ENCODE measurements at regions of chr1 and their contacts with region 1.

Region 1: GRCh38 chr1:171485375-171486047 is at the start of gene PRRC2C:
- DNase-seq: peak; percentile 94 to 96
- H3K4me3 ChIP-seq: peak within 1 kb of the TSS; percentile 87
- H3K4me3 Mint-ChIP-seq: peak within 1 kb of the TSS; percentile 96
- H3K27ac Mint-ChIP-seq: peak within 1 kb of the TSS; percentile 94
- H3K4me1 ChIP-seq: peaks cover 20% of the 10 kb centered on the region
- H3K4me1 Mint-ChIP-seq: peaks cover 12% of the 10 kb centered on the region
- H3K27me3 ChIP-seq: no peaks in the 10 kb centered on the region
- H3K27me3 Mint-ChIP-seq: no peaks in the 10 kb centered on the region
- CTCF ChIP-seq: peak; percentile 73 to 80
- total RNA-seq, gene PRRC2C: 208 and 237 TPM in 2 replicates

Region 2: GRCh38 chr1:171233190-171233589 is 252.3 kb before region 1 on chr1:
- CTCF ChIA-PET with region 1: no interaction called
- POLR2A ChIA-PET with region 1: no interaction called
- intact Hi-C with region 1: no loop called
- DNase-seq: no peak
- H3K4me3 ChIP-seq: no peak overlapping the region
- H3K4me3 Mint-ChIP-seq: no peak overlapping the region
- H3K27ac Mint-ChIP-seq: no peak overlapping the region
- H3K4me1 ChIP-seq: no peaks in the 10 kb centered on the region
- H3K4me1 Mint-ChIP-seq: no peaks in the 10 kb centered on the region
- H3K27me3 ChIP-seq: no peaks in the 10 kb centered on the region
- H3K27me3 Mint-ChIP-seq: no peaks in the 10 kb centered on the region
- CTCF ChIP-seq: no peak

Region 3: DNA sequence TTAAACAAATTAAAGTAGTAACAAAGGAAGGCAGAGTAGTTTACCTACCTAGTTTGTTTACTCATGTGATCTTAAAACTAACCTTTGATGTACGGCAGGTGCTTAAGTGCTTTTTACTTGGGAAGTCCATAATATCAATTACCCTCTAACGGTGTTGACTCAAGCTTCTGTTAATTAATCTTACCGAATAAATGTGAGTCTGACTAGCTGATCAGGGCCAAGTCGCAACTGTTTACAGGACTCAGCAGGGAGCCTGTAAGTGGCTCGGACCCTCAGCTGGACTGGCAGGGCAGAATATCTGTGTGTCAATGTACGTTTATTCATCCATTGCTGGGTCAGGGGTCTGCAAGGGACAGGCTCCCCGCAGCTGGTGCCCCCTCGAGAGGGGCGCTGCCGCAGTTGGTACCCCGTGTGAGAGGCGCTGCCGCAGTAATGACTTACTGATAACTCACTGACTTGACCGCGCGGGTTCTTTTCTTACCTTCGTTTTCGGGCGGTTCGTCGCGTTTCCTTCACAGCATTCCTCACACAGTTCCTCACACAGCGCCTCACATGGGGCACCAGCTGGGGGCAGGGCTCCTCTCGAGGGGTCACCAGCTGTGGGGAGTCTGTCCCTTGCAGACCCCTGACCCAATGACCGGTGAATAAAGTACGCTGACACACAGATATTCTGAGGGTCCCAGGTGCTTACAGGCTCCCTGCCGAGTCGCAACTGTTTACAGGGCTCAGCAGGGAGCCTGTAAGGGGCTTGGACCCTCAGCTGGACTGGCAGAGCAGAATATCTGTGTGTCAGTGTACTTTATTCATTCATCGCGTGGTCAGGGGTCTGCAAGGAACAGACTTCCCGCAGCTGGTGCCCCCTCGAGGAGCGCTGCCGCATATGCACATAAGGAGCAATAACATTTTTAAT is 234.2 kb before region 1 on chr1:
- CTCF ChIA-PET with region 1: no interaction called
- POLR2A ChIA-PET with region 1: no interaction called
- intact Hi-C with region 1: loop called (anchors 10 kb)
- DNase-seq: peak; percentile 46 to 59
- H3K4me3 ChIP-seq: peak overlapping the region; percentile 83
- H3K4me3 Mint-ChIP-seq: peak overlapping the region; percentile 85
- H3K27ac Mint-ChIP-seq: peak overlapping the region; percentile 85
- H3K4me1 ChIP-seq: peaks cover 19% of the 10 kb centered on the region
- H3K4me1 Mint-ChIP-seq: peaks cover 22% of the 10 kb centered on the region
- H3K27me3 ChIP-seq: no peaks in the 10 kb centered on the region
- H3K27me3 Mint-ChIP-seq: no peaks in the 10 kb centered on the region
- CTCF ChIP-seq: peak; percentile 70 to 72

Region 4: DNA sequence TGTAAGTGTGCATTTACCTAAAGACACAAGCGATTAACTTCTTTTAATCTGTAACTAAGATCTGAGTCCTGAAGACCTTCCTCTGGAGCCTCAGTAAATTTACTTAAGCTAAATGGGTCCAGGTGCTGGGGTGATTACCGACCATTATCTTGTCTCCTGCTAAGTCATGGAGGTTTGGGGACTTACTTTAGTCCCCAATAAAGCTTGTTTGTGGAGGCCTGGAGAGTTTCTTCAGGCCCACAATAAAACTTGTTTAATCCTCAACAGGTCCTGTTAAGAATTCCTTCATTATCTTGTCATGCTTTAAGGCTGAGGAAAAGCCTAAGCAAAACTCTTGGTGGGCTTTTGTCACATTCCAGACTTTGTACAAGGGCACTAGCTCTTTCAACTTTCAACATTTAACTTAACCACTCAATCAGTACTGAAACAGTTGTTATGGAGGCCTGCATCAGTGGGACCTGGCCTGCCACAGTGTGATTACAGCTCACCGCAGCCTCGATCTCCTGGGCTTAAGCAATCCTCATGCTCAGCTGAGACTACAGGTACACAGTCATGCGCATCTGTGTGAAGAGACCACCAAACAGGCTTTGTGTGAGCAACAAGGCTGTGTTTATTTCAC is 87.6 kb before region 1 on chr1:
- CTCF ChIA-PET with region 1: interaction called, 4 read pairs
- POLR2A ChIA-PET with region 1: interaction called, 3 read pairs
- intact Hi-C with region 1: loop called (anchors 2 kb)
- DNase-seq: peak; percentile 49 to 67
- H3K4me3 ChIP-seq: no peak overlapping the region
- H3K4me3 Mint-ChIP-seq: peak overlapping the region; percentile 60
- H3K27ac Mint-ChIP-seq: peak overlapping the region; percentile 96
- H3K4me1 ChIP-seq: peaks cover 68% of the 10 kb centered on the region
- H3K4me1 Mint-ChIP-seq: peaks cover 33% of the 10 kb centered on the region
- H3K27me3 ChIP-seq: no peaks in the 10 kb centered on the region
- H3K27me3 Mint-ChIP-seq: no peaks in the 10 kb centered on the region
- CTCF ChIP-seq: no peak

Region 5: DNA sequence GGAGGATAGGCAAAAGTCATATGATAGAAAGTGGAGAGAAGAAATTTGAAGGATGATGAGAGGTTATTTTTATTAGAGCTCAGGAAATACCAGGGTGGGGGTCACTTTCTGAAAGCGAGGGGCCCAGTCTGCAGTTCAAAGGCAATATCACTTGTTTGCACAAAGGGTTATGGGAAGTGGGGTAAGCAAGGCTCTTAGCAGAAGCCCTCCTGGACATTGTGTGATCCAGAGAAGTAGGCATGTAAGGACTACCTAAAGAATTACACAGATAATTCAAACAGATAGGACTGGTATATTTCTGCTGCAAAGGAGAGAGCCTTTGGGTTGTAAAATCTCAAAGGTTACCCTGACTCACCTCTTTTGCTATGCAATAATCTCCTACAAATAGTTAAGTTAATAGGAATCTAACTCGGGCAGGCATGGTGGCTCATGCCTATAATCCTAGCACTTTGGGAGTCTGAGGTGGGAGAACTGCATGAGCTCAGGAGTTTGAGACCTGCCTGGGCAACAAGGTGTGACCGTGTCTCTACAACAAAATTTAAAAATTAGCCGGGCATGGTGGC is 25.4 kb before region 1 on chr1:
- CTCF ChIA-PET with region 1: interaction called, 11 read pairs
- POLR2A ChIA-PET with region 1: no interaction called
- intact Hi-C with region 1: no loop called
- DNase-seq: peak; percentile 29 to 52
- H3K4me3 ChIP-seq: no peak overlapping the region
- H3K4me3 Mint-ChIP-seq: no peak overlapping the region
- H3K27ac Mint-ChIP-seq: peak overlapping the region; percentile 85
- H3K4me1 ChIP-seq: peaks cover 7% of the 10 kb centered on the region
- H3K4me1 Mint-ChIP-seq: peaks cover 19% of the 10 kb centered on the region
- H3K27me3 ChIP-seq: no peaks in the 10 kb centered on the region
- H3K27me3 Mint-ChIP-seq: no peaks in the 10 kb centered on the region
- CTCF ChIP-seq: no peak

Region 6: DNA sequence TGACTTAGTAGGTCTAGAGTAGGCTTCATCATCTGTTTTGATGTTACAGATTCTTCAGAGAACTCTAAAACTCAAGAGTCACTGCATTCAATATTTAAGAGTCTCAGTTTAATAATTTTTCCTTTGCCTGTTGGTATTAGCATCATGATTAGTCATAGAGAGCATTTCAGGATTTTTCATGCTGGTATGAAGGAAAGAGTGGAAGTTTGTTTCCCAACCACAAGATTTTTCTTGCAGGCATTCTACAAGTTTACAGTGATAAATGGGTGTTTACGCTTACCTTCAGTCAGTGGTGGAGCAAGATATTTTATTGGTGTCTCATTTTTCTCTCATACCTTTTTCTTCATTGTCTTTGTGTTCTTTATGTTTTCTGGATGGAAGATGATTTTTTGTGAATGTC is 78.2 kb after region 1 on chr1:
- CTCF ChIA-PET with region 1: no interaction called
- POLR2A ChIA-PET with region 1: no interaction called
- intact Hi-C with region 1: no loop called
- DNase-seq: no peak
- H3K4me3 ChIP-seq: no peak overlapping the region
- H3K4me3 Mint-ChIP-seq: no peak overlapping the region
- H3K27ac Mint-ChIP-seq: no peak overlapping the region
- H3K4me1 ChIP-seq: no peaks in the 10 kb centered on the region
- H3K4me1 Mint-ChIP-seq: no peaks in the 10 kb centered on the region
- H3K27me3 ChIP-seq: no peaks in the 10 kb centered on the region
- H3K27me3 Mint-ChIP-seq: no peaks in the 10 kb centered on the region
- CTCF ChIP-seq: no peak

Region 7: DNA sequence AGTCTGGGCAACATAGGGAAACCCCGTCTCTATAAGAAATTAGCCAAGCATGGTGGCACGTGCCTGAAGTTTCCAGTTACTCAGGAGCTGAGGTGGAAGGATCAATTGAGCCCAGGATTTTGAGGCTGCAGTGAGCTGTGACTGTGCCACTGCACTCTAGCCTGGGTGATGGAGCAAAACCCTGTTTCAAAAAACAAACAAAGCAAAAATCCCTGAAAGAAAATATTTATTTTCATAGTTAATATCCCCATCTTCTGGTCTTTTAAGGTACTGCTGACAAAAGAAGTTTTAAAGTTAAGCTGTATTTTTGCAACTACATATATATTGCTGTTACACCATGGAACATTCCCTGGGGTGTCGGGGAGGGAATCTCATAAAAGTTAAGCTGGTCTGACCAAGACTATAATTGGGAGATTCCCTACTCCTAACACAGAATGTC is 230.3 kb after region 1 on chr1:
- CTCF ChIA-PET with region 1: no interaction called
- POLR2A ChIA-PET with region 1: no interaction called
- intact Hi-C with region 1: loop called (anchors 2 kb)
- DNase-seq: peak in 1 of 2 experiments; percentile 8
- H3K4me3 ChIP-seq: no peak overlapping the region
- H3K4me3 Mint-ChIP-seq: no peak overlapping the region
- H3K27ac Mint-ChIP-seq: no peak overlapping the region
- H3K4me1 ChIP-seq: no peaks in the 10 kb centered on the region
- H3K4me1 Mint-ChIP-seq: no peaks in the 10 kb centered on the region
- H3K27me3 ChIP-seq: no peaks in the 10 kb centered on the region
- H3K27me3 Mint-ChIP-seq: no peaks in the 10 kb centered on the region
- CTCF ChIP-seq: peak; percentile 13 to 53

Measured in Caco-2 (cell line).